ENCODE measurements at regions of chr1 and their contacts with region 1.

Region 1: DNA sequence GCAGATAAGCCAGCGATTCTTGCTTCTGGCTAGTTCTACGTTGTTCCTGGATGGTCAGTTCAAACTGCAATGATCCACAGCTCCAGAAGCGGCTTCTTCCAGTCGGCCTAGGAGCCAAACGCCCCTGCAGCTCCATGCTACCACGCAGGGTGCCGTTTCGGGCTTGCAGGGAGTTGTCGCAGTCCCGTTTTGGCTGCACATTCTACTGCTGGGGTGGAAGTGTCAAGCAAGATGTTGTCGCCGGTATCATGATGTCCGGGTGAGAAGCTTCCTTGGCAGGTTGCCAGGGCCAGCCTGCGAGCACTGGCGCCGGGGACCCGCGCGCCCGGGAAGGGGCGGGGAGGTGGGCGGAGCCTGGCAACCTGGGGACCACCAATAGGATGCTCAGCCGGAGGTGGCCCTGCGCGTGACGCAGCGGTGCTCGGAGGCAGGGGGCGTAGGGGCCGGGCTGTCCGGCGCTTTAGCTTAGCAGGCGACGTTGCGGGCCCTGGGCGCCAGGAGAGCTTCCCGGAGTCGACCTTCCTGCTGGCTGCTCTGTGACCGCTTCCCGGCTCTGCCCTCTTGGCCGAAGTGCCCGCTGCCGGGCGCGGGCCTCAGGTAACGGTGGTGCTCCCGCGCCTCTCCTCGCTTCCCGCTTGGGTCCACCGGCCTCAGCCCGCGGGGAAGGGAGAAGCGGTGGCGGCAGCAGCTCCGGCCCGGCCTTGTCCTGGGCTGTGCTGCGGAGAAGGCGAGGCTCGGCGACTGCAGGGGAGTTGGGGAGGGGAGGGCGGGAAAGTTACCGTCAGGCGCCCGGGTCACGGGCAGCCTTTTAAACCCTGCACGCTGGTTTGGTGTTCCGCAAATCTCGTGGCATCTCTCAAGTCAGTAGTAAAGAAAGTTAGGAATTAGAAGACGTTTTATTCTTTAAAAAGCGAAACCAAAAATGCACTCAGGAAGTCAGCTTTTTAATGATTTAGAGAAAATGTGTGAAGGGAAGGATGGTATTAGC is at the start of gene SOAT1:
- DNase-seq: peak; percentile 82 to 97 (median 95)
- ATAC-seq: peak; percentile 96
- H3K4me3 ChIP-seq: peak within 1 kb of the TSS; percentile 88 to 92
- H3K4me3 Mint-ChIP-seq: peak within 1 kb of the TSS; percentile 91
- H3K27ac ChIP-seq: peak within 1 kb of the TSS; percentile 92 to 93
- H3K27ac Mint-ChIP-seq: peak within 1 kb of the TSS; percentile 93
- H3K4me1 ChIP-seq: peaks cover 39% of the 10 kb centered on the region
- H3K4me1 Mint-ChIP-seq: peaks cover 48% of the 10 kb centered on the region
- H3K27me3 ChIP-seq: no peaks in the 10 kb centered on the region
- H3K27me3 Mint-ChIP-seq: no peaks in the 10 kb centered on the region
- CTCF ChIP-seq: no peak
- total RNA-seq, gene SOAT1: 34.9 TPM

Region 2: GRCh38 chr1:178725603-178726517 is 567.8 kb before region 1 on chr1:
- CTCF ChIA-PET with region 1: no interaction called
- POLR2A ChIA-PET with region 1: interaction called, 3 read pairs
- intact Hi-C with region 1: loop called (anchors 1 to 10 kb)
- DNase-seq: peak in 8 of 9 experiments; percentile 31 to 85 (median 62)
- ATAC-seq: peak; percentile 81
- H3K4me3 ChIP-seq: peak overlapping the region; percentile 67 to 90
- H3K4me3 Mint-ChIP-seq: peak overlapping the region; percentile 85
- H3K27ac ChIP-seq: peak overlapping the region; percentile 58 to 69
- H3K27ac Mint-ChIP-seq: peak overlapping the region; percentile 75
- H3K4me1 ChIP-seq: peaks cover 10% of the 10 kb centered on the region
- H3K4me1 Mint-ChIP-seq: peaks cover 23% of the 10 kb centered on the region
- H3K27me3 ChIP-seq: no peaks in the 10 kb centered on the region
- H3K27me3 Mint-ChIP-seq: peaks cover 3% of the 10 kb centered on the region
- CTCF ChIP-seq: no peak

Region 3: DNA sequence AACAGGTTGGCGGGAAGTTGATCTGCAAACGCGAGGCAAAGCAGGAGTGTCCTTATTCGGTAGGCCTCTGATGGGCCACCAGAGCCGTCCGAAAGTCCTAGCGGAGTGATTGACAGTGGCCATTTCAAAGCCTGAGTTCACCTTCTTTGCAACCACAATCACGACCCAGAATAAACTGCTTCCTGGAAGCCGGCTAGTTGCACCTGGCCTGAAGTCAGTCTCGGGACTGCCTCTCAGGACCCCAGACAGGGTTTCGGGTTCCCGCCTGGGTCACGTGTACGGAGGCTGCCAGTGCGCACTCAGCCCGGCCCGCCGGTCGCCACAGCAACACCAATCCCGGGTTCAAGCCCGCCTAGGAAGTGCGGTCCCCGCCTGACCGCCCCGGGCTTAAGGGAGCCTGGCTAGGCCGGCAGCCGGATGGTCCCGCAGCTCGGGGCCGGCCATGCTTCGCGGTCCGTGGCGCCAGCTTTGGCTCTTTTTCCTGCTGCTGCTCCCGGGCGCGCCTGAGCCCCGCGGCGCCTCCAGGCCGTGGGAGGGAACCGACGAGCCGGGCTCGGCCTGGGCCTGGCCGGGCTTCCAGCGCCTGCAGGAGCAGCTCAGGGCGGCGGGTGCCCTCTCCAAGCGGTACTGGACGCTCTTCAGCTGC is 211.8 kb before region 1 on chr1 and contains the start of gene TOR3A:
- CTCF ChIA-PET with region 1: interaction called, 3 read pairs
- POLR2A ChIA-PET with region 1: interaction called, 3 read pairs
- intact Hi-C with region 1: loop called (anchors 1 to 2 kb)
- DNase-seq: peak; percentile 43 to 87 (median 75)
- ATAC-seq: peak; percentile 47
- H3K4me3 ChIP-seq: peak within 1 kb of the TSS; percentile 62 to 78
- H3K4me3 Mint-ChIP-seq: peak within 1 kb of the TSS; percentile 98
- H3K27ac ChIP-seq: peak within 1 kb of the TSS; percentile 58 to 74
- H3K27ac Mint-ChIP-seq: peak within 1 kb of the TSS; percentile 97
- H3K4me1 ChIP-seq: peaks cover 20% of the 10 kb centered on the region
- H3K4me1 Mint-ChIP-seq: peaks cover 31% of the 10 kb centered on the region
- H3K27me3 ChIP-seq: no peaks in the 10 kb centered on the region
- H3K27me3 Mint-ChIP-seq: no peaks in the 10 kb centered on the region
- CTCF ChIP-seq: no peak
- total RNA-seq, gene TOR3A: 15.6 to 16.0 TPM

Region 4: DNA sequence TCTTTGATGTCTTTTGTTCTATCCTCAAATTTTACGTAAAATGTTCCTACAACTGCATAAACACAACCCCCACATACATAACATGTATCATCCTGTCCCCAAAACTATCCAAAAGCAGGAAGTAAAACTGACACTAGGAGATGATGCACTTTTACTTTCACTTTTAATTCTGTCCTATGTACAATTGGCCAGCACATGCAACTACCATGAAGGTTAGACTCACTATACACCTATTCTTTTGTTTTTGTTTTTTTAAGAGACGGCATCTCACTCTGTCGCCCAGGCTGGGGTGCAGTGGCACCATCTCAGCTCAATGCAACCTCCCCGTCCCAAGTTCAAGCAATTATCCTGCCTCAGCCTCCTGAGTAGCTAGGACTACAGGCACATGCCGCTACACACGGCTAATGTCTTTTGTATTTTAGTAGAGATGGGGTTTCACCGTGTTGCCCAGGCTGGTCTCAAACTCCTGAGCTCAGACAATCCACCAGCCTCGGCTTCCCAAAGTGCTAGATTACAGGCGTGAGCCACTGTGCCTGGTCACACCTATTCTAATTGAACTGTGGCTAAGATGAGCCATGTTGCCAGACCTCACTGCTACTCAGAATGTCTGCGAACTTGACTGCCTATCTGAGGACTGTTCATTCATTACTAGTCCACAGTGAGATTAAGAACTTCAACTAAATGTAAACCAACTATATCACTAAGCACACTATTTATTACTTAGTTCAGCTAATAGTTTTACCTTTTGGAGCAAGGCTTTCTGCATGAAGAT is 163.7 kb before region 1 on chr1:
- CTCF ChIA-PET with region 1: interaction called, 5 read pairs
- POLR2A ChIA-PET with region 1: interaction called, 3 read pairs
- intact Hi-C with region 1: loop called (anchors 2 kb)
- DNase-seq: peak in 5 of 9 experiments; percentile 6 to 83 (median 64)
- ATAC-seq: peak; percentile 96
- H3K4me3 ChIP-seq: peak overlapping the region; percentile 12 to 26
- H3K4me3 Mint-ChIP-seq: peak overlapping the region; percentile 68
- H3K27ac ChIP-seq: peak overlapping the region; percentile 52 to 80
- H3K27ac Mint-ChIP-seq: peak overlapping the region; percentile 90
- H3K4me1 ChIP-seq: peaks cover 17% of the 10 kb centered on the region
- H3K4me1 Mint-ChIP-seq: peaks cover 19% of the 10 kb centered on the region
- H3K27me3 ChIP-seq: no peaks in the 10 kb centered on the region
- H3K27me3 Mint-ChIP-seq: no peaks in the 10 kb centered on the region
- CTCF ChIP-seq: no peak

Region 5: GRCh38 chr1:179251675-179252074 is 42.0 kb before region 1 on chr1:
- CTCF ChIA-PET with region 1: interaction called, 10 read pairs
- POLR2A ChIA-PET with region 1: interaction called, 3 read pairs
- intact Hi-C with region 1: no loop called
- DNase-seq: peak in 2 of 9 experiments; percentile 31 to 49
- ATAC-seq: no peak
- H3K4me3 ChIP-seq: no peak overlapping the region
- H3K4me3 Mint-ChIP-seq: no peak overlapping the region
- H3K27ac ChIP-seq: no peak overlapping the region
- H3K27ac Mint-ChIP-seq: no peak overlapping the region
- H3K4me1 ChIP-seq: no peaks in the 10 kb centered on the region
- H3K4me1 Mint-ChIP-seq: no peaks in the 10 kb centered on the region
- H3K27me3 ChIP-seq: no peaks in the 10 kb centered on the region
- H3K27me3 Mint-ChIP-seq: no peaks in the 10 kb centered on the region
- CTCF ChIP-seq: no peak

Region 6: DNA sequence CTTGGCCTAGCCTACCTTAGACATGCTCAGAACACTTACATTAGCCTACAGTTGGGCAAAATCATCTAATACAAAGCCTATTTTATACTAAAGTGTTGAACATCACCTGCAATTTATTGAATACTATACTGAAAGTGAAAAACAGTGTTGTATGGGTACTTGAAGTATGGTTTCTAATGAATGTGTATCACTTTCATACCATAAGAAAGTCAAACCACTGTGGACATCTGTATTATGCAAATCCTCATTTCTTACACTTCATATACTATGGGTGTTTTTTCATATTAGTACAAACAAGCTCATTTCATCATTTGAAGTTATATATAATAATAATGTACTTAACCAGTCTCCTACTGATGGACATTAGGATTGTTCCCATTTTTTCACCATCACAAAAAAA is 339.2 kb after region 1 on chr1:
- CTCF ChIA-PET with region 1: no interaction called
- POLR2A ChIA-PET with region 1: no interaction called
- intact Hi-C with region 1: no loop called
- DNase-seq: no peak
- ATAC-seq: no peak
- H3K4me3 ChIP-seq: no peak overlapping the region
- H3K4me3 Mint-ChIP-seq: no peak overlapping the region
- H3K27ac ChIP-seq: no peak overlapping the region
- H3K27ac Mint-ChIP-seq: no peak overlapping the region
- H3K4me1 ChIP-seq: no peaks in the 10 kb centered on the region
- H3K4me1 Mint-ChIP-seq: no peaks in the 10 kb centered on the region
- H3K27me3 ChIP-seq: no peaks in the 10 kb centered on the region
- H3K27me3 Mint-ChIP-seq: no peaks in the 10 kb centered on the region
- CTCF ChIP-seq: no peak

Region 7: GRCh38 chr1:179954493-179955297 is 661.1 kb after region 1 on chr1 and contains the start of gene CEP350:
- CTCF ChIA-PET with region 1: no interaction called
- POLR2A ChIA-PET with region 1: no interaction called
- intact Hi-C with region 1: loop called in 1 of 2 experiments (anchors 1 kb)
- DNase-seq: peak; percentile 94 to 100 (median 97)
- ATAC-seq: peak; percentile 86
- H3K4me3 ChIP-seq: peak within 1 kb of the TSS; percentile 69 to 85
- H3K4me3 Mint-ChIP-seq: peak within 1 kb of the TSS; percentile 85
- H3K27ac ChIP-seq: peak within 1 kb of the TSS; percentile 77 to 88
- H3K27ac Mint-ChIP-seq: peak within 1 kb of the TSS; percentile 95
- H3K4me1 ChIP-seq: peaks cover 35% of the 10 kb centered on the region
- H3K4me1 Mint-ChIP-seq: peaks cover 59% of the 10 kb centered on the region
- H3K27me3 ChIP-seq: no peaks in the 10 kb centered on the region
- H3K27me3 Mint-ChIP-seq: no peaks in the 10 kb centered on the region
- CTCF ChIP-seq: no peak
- total RNA-seq, gene CEP350: 37.6 to 42.7 TPM